CD4-positive, alpha-beta T cell (primary cell): ENCODE measurements at regions of chr9 and their contacts with region 1.

Region 1: GRCh38 chr9:4640027-4640426 is 22.1 kb upstream of the PLPP6 start:
- DNase-seq: peak; percentile 43 to 74 (median 51)
- ATAC-seq: peak; percentile 78
- H3K4me3 ChIP-seq: no peak overlapping the region
- H3K4me3 Mint-ChIP-seq: no peak overlapping the region
- H3K27ac ChIP-seq: no peak overlapping the region
- H3K27ac Mint-ChIP-seq: no peak overlapping the region
- H3K4me1 ChIP-seq: no peaks in the 10 kb centered on the region
- H3K4me1 Mint-ChIP-seq: peaks cover 12% of the 10 kb centered on the region
- H3K27me3 ChIP-seq: no peaks in the 10 kb centered on the region
- H3K27me3 Mint-ChIP-seq: no peaks in the 10 kb centered on the region
- CTCF ChIP-seq: peak; percentile 71

Region 2: GRCh38 chr9:3370715-3371114 is 1269.3 kb before region 1 on chr9:
- CTCF ChIA-PET with region 1: no interaction called
- POLR2A ChIA-PET with region 1: no interaction called
- intact Hi-C with region 1: no loop called
- DNase-seq: no peak
- ATAC-seq: no peak
- H3K4me3 ChIP-seq: no peak overlapping the region
- H3K4me3 Mint-ChIP-seq: no peak overlapping the region
- H3K27ac ChIP-seq: no peak overlapping the region
- H3K27ac Mint-ChIP-seq: no peak overlapping the region
- H3K4me1 ChIP-seq: no peaks in the 10 kb centered on the region
- H3K4me1 Mint-ChIP-seq: peaks cover 11% of the 10 kb centered on the region
- H3K27me3 ChIP-seq: no peaks in the 10 kb centered on the region
- H3K27me3 Mint-ChIP-seq: no peaks in the 10 kb centered on the region
- CTCF ChIP-seq: no peak

Region 3: GRCh38 chr9:3732077-3733038 is 907.7 kb before region 1 on chr9:
- CTCF ChIA-PET with region 1: no interaction called
- POLR2A ChIA-PET with region 1: no interaction called
- intact Hi-C with region 1: loop called in 1 of 2 experiments (anchors 10 kb)
- DNase-seq: peak in 6 of 14 experiments; percentile 1 to 66 (median 46)
- ATAC-seq: peak; percentile 91
- H3K4me3 ChIP-seq: no peak overlapping the region
- H3K4me3 Mint-ChIP-seq: no peak overlapping the region
- H3K27ac ChIP-seq: no peak overlapping the region
- H3K27ac Mint-ChIP-seq: no peak overlapping the region
- H3K4me1 ChIP-seq: peaks cover 4% of the 10 kb centered on the region
- H3K4me1 Mint-ChIP-seq: peaks cover 5% of the 10 kb centered on the region
- H3K27me3 ChIP-seq: no peaks in the 10 kb centered on the region
- H3K27me3 Mint-ChIP-seq: no peaks in the 10 kb centered on the region
- CTCF ChIP-seq: peak; percentile 43

Region 4: GRCh38 chr9:4382722-4383317 is 257.2 kb before region 1 on chr9:
- CTCF ChIA-PET with region 1: interaction called, 6 read pairs
- POLR2A ChIA-PET with region 1: interaction called, 12 read pairs
- intact Hi-C with region 1: loop called (anchors 1 kb)
- DNase-seq: peak in 4 of 14 experiments; percentile 21 to 58 (median 47)
- ATAC-seq: peak; percentile 37
- H3K4me3 ChIP-seq: no peak overlapping the region
- H3K4me3 Mint-ChIP-seq: no peak overlapping the region
- H3K27ac ChIP-seq: no peak overlapping the region
- H3K27ac Mint-ChIP-seq: no peak overlapping the region
- H3K4me1 ChIP-seq: no peaks in the 10 kb centered on the region
- H3K4me1 Mint-ChIP-seq: peaks cover 4% of the 10 kb centered on the region
- H3K27me3 ChIP-seq: no peaks in the 10 kb centered on the region
- H3K27me3 Mint-ChIP-seq: no peaks in the 10 kb centered on the region
- CTCF ChIP-seq: peak; percentile 63

Region 5: GRCh38 chr9:4596165-4596922 is 43.7 kb before region 1 on chr9:
- CTCF ChIA-PET with region 1: interaction called, 3 read pairs
- POLR2A ChIA-PET with region 1: interaction called, 5 read pairs
- intact Hi-C with region 1: loop called in 1 of 2 experiments (anchors 2 kb)
- DNase-seq: peak; percentile 30 to 86 (median 55)
- ATAC-seq: peak; percentile 91
- H3K4me3 ChIP-seq: no peak overlapping the region
- H3K4me3 Mint-ChIP-seq: peak overlapping the region; percentile 62
- H3K27ac ChIP-seq: peak overlapping the region; percentile 25 to 73
- H3K27ac Mint-ChIP-seq: peak overlapping the region; percentile 94
- H3K4me1 ChIP-seq: peaks cover 39% of the 10 kb centered on the region
- H3K4me1 Mint-ChIP-seq: peaks cover 72% of the 10 kb centered on the region
- H3K27me3 ChIP-seq: no peaks in the 10 kb centered on the region
- H3K27me3 Mint-ChIP-seq: no peaks in the 10 kb centered on the region
- CTCF ChIP-seq: peak; percentile 50

Region 6: GRCh38 chr9:4662108-4662988 is 22.3 kb after region 1 on chr9 and contains the start of gene PLPP6:
- CTCF ChIA-PET with region 1: interaction called, 11 read pairs
- POLR2A ChIA-PET with region 1: interaction called, 4 read pairs
- intact Hi-C with region 1: no loop called
- DNase-seq: peak; percentile 48 to 91 (median 69)
- ATAC-seq: peak; percentile 75
- H3K4me3 ChIP-seq: peak within 1 kb of the TSS; percentile 81
- H3K4me3 Mint-ChIP-seq: peak within 1 kb of the TSS; percentile 97
- H3K27ac ChIP-seq: peak within 1 kb of the TSS; percentile 70 to 72
- H3K27ac Mint-ChIP-seq: peak within 1 kb of the TSS; percentile 88
- H3K4me1 ChIP-seq: peaks cover 45% of the 10 kb centered on the region
- H3K4me1 Mint-ChIP-seq: peaks cover 58% of the 10 kb centered on the region
- H3K27me3 ChIP-seq: no peaks in the 10 kb centered on the region
- H3K27me3 Mint-ChIP-seq: no peaks in the 10 kb centered on the region
- CTCF ChIP-seq: peak; percentile 66
- total RNA-seq, gene PLPP6: 8.9 to 10.5 TPM

Region 7: GRCh38 chr9:4700091-4700490 is 60.1 kb after region 1 on chr9:
- CTCF ChIA-PET with region 1: no interaction called
- POLR2A ChIA-PET with region 1: no interaction called
- intact Hi-C with region 1: no loop called
- DNase-seq: no peak
- ATAC-seq: no peak
- H3K4me3 ChIP-seq: no peak overlapping the region
- H3K4me3 Mint-ChIP-seq: no peak overlapping the region
- H3K27ac ChIP-seq: no peak overlapping the region
- H3K27ac Mint-ChIP-seq: no peak overlapping the region
- H3K4me1 ChIP-seq: peaks cover 3% of the 10 kb centered on the region
- H3K4me1 Mint-ChIP-seq: peaks cover 20% of the 10 kb centered on the region
- H3K27me3 ChIP-seq: no peaks in the 10 kb centered on the region
- H3K27me3 Mint-ChIP-seq: no peaks in the 10 kb centered on the region
- CTCF ChIP-seq: no peak

Region 8: DNA sequence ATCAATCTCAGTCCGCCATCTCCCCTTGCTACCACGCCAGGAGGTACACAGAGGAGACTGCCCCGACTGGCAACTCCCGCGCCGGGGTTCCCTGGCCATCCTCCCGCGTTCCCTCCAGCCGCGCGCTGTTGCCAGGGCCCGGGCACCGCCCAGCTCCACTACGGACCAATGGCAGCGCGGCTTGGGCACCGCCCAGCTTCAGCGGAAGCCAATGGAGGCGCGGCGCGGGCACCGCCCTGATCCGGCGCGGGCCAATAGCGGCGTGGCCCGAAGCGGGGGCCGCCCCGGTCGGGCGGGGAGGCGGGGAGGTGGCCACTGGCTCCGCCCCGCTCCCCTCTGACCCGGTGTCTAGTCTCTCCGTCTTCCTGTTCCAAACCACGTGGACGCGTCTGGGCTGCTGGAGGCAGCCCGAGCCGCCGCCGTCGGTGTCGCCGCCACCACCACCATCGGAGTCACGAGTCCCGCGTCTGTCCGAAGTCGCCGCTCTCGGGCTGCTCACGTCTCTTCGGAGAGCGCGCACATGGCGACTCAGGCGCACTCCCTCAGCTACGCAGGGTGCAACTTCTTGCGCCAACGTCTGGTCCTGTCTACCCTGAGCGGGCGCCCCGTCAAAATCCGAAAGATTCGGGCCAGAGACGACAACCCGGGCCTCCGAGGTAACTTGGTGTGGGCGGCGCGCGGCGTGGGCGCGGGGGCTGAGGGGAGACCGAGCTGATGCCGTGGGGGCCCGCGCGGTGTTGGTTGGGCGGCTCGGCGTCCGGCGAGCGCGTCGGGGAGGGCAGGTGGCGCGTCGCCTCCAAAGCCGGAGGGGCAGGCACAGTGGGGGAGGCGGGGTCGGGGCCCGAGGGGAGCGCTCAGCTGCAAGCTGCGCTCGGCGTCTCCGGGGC is 152.8 kb after region 1 on chr9 and contains the start of gene RCL1:
- CTCF ChIA-PET with region 1: no interaction called
- POLR2A ChIA-PET with region 1: no interaction called
- intact Hi-C with region 1: no loop called
- DNase-seq: peak; percentile 89 to 98 (median 94)
- ATAC-seq: peak; percentile 89
- H3K4me3 ChIP-seq: peak within 1 kb of the TSS; percentile 87
- H3K4me3 Mint-ChIP-seq: peak within 1 kb of the TSS; percentile 97
- H3K27ac ChIP-seq: peak within 1 kb of the TSS; percentile 83 to 87
- H3K27ac Mint-ChIP-seq: peak within 1 kb of the TSS; percentile 92
- H3K4me1 ChIP-seq: peaks cover 25% of the 10 kb centered on the region
- H3K4me1 Mint-ChIP-seq: peaks cover 45% of the 10 kb centered on the region
- H3K27me3 ChIP-seq: no peaks in the 10 kb centered on the region
- H3K27me3 Mint-ChIP-seq: no peaks in the 10 kb centered on the region
- CTCF ChIP-seq: no peak
- total RNA-seq, gene RCL1: 33.8 to 35.5 TPM